GM12878 (cell line): ENCODE measurements at regions of chr9 and their contacts with region 1.

Region 1: GRCh38 chr9:111118256-111118948 is 80.1 kb upstream of the LPAR1 start:
- DNase-seq: no peak
- ATAC-seq: no peak
- H3K4me3 ChIP-seq: no peak overlapping the region
- H3K27ac ChIP-seq: no peak overlapping the region
- H3K4me1 ChIP-seq: no peaks in the 10 kb centered on the region
- H3K27me3 ChIP-seq: no peaks in the 10 kb centered on the region
- CTCF ChIP-seq: no peak
- EP300 ChIP-seq: no peak
- POLR2A ChIP-seq: no peak
- RAD21 ChIP-seq: no peak

Region 2: GRCh38 chr9:111102793-111103464 is 15.5 kb before region 1 on chr9:
- CTCF ChIA-PET with region 1: no interaction called
- POLR2A ChIA-PET with region 1: no interaction called
- RAD21 ChIA-PET with region 1: no interaction called
- SMC1A ChIA-PET with region 1: interaction called, 11 read pairs
- in situ Hi-C with region 1: no loop called
- intact Hi-C with region 1: no loop called
- DNase-seq: no peak
- ATAC-seq: no peak
- H3K4me3 ChIP-seq: no peak overlapping the region
- H3K27ac ChIP-seq: no peak overlapping the region
- H3K4me1 ChIP-seq: no peaks in the 10 kb centered on the region
- H3K27me3 ChIP-seq: no peaks in the 10 kb centered on the region
- CTCF ChIP-seq: no peak
- EP300 ChIP-seq: no peak
- POLR2A ChIP-seq: no peak
- RAD21 ChIP-seq: no peak

Region 3: DNA sequence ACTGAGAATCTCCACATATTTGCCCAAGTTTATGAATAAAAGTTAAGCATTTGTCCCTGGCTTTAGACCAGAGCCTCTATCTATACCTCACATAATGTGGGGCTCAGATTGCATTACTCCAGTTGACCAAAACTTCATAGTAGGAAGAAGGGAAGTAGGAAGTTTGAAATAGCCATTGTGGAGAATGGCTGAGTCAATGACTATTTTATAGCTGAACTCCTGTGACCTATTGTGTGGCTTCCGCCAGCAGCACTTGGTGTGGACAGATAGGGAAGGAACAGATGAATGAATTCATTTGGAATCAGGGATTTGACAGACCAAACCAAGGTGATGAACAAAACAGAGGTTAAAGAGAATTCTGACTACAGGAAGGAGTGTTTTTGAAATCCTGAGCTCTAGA is 12.8 kb after region 1 on chr9:
- CTCF ChIA-PET with region 1: interaction called, 5 read pairs
- POLR2A ChIA-PET with region 1: no interaction called
- RAD21 ChIA-PET with region 1: interaction called, 3 read pairs
- SMC1A ChIA-PET with region 1: interaction called, 13 read pairs
- in situ Hi-C with region 1: no loop called
- intact Hi-C with region 1: no loop called
- DNase-seq: no peak
- ATAC-seq: no peak
- H3K4me3 ChIP-seq: no peak overlapping the region
- H3K27ac ChIP-seq: no peak overlapping the region
- H3K4me1 ChIP-seq: no peaks in the 10 kb centered on the region
- H3K27me3 ChIP-seq: no peaks in the 10 kb centered on the region
- CTCF ChIP-seq: no peak
- EP300 ChIP-seq: no peak
- POLR2A ChIP-seq: no peak
- RAD21 ChIP-seq: no peak

Region 4: GRCh38 chr9:111399772-111400563 is 281.6 kb after region 1 on chr9:
- CTCF ChIA-PET with region 1: no interaction called
- POLR2A ChIA-PET with region 1: no interaction called
- RAD21 ChIA-PET with region 1: no interaction called
- SMC1A ChIA-PET with region 1: no interaction called
- in situ Hi-C with region 1: no loop called
- intact Hi-C with region 1: no loop called
- DNase-seq: no peak
- ATAC-seq: peak; percentile 88
- H3K4me3 ChIP-seq: no peak overlapping the region
- H3K27ac ChIP-seq: no peak overlapping the region
- H3K4me1 ChIP-seq: no peaks in the 10 kb centered on the region
- H3K27me3 ChIP-seq: no peaks in the 10 kb centered on the region
- CTCF ChIP-seq: peak; percentile 26 to 61 (median 45); a peak in 5 of 6 replicates
- EP300 ChIP-seq: no peak
- POLR2A ChIP-seq: no peak
- RAD21 ChIP-seq: peak; percentile 21; the same call in 1 of the 2 replicates

Region 5: DNA sequence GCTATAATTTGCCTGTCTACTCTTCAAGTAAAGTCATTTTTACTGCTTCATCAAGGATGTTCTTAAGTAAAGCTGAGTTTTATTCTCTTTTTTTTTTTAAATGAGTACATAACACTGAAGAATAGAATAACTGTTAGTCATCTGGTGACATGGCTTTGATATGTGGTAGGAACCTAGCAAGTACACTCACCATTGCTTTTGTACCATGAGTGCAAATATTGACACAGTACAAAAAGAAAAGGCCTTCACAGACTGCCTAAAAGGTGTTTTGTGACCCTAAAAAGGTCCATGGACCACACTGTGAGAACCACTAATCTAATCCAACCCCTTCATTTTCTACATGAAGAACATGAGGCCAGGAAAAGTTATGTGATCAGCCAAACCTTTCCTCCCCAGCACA is 310.8 kb after region 1 on chr9:
- CTCF ChIA-PET with region 1: no interaction called
- POLR2A ChIA-PET with region 1: no interaction called
- RAD21 ChIA-PET with region 1: no interaction called
- SMC1A ChIA-PET with region 1: no interaction called
- in situ Hi-C with region 1: no loop called
- intact Hi-C with region 1: no loop called
- DNase-seq: no peak
- ATAC-seq: no peak
- H3K4me3 ChIP-seq: no peak overlapping the region
- H3K27ac ChIP-seq: no peak overlapping the region
- H3K4me1 ChIP-seq: no peaks in the 10 kb centered on the region
- H3K27me3 ChIP-seq: no peaks in the 10 kb centered on the region
- CTCF ChIP-seq: no peak
- EP300 ChIP-seq: no peak
- POLR2A ChIP-seq: no peak
- RAD21 ChIP-seq: no peak